ENCODE measurements at regions of chr2 and their contacts with region 1.

Region 1: GRCh38 chr2:187499941-187500532 is 52.0 kb upstream of the CALCRL start:
- DNase-seq: no peak
- ATAC-seq: peak; percentile 94
- H3K4me3 ChIP-seq: no peak overlapping the region
- H3K27ac ChIP-seq: no peak overlapping the region
- H3K4me1 ChIP-seq: no peaks in the 10 kb centered on the region
- H3K27me3 ChIP-seq: no peaks in the 10 kb centered on the region
- CTCF ChIP-seq: peak; percentile 61 to 92 (median 63); a peak in 5 of 6 replicates
- EP300 ChIP-seq: no peak
- POLR2A ChIP-seq: no peak
- RAD21 ChIP-seq: peak; percentile 99

Region 2: GRCh38 chr2:187475499-187476248 is 24.4 kb before region 1 on chr2:
- CTCF ChIA-PET with region 1: interaction called, 9 read pairs
- POLR2A ChIA-PET with region 1: no interaction called
- RAD21 ChIA-PET with region 1: interaction called, 3 read pairs
- SMC1A ChIA-PET with region 1: interaction called, 10 read pairs
- in situ Hi-C with region 1: no loop called
- intact Hi-C with region 1: no loop called
- DNase-seq: no peak
- ATAC-seq: peak; percentile 93
- H3K4me3 ChIP-seq: no peak overlapping the region
- H3K27ac ChIP-seq: peak overlapping the region; percentile 47
- H3K4me1 ChIP-seq: no peaks in the 10 kb centered on the region
- H3K27me3 ChIP-seq: no peaks in the 10 kb centered on the region
- CTCF ChIP-seq: no peak
- EP300 ChIP-seq: peak; percentile 69 to 84; a peak in 2 of 4 replicates
- POLR2A ChIP-seq: no peak
- RAD21 ChIP-seq: no peak

Region 3: GRCh38 chr2:187519419-187520120 is 19.5 kb after region 1 on chr2:
- CTCF ChIA-PET with region 1: interaction called, 14 read pairs
- POLR2A ChIA-PET with region 1: no interaction called
- RAD21 ChIA-PET with region 1: interaction called, 4 read pairs
- SMC1A ChIA-PET with region 1: interaction called, 17 read pairs
- in situ Hi-C with region 1: no loop called
- intact Hi-C with region 1: no loop called
- DNase-seq: no peak
- ATAC-seq: peak; percentile 73
- H3K4me3 ChIP-seq: no peak overlapping the region
- H3K27ac ChIP-seq: no peak overlapping the region
- H3K4me1 ChIP-seq: no peaks in the 10 kb centered on the region
- H3K27me3 ChIP-seq: no peaks in the 10 kb centered on the region
- CTCF ChIP-seq: no peak
- EP300 ChIP-seq: no peak
- POLR2A ChIP-seq: no peak
- RAD21 ChIP-seq: no peak

Region 4: DNA sequence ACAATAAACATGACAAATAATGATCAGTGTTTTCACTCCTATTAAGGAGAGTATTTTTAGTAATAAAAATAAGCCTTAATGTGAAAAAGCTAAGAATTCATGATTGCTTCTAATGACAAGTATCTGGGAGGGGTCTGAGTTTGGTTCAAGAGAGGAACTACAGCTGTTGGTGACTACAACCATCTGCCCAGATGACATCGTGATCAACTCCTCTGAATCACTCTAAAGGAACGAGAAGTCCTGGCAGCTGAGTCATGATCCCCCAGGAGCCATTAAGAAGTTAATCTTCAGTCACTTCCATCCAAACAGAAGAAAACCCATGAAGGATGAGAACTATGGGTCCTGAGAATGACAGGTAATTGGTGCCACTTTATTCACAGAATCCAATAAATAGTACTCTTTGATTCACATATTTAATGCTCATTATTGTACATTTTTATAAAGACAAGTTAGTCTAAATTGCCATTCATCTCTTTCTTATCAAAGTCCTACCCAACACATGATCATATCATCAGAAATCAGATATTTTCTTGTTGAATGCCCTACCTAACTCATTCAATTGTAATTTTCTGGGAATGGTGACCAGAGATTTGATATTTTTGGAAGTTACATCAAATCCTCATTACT is 47.4 kb after region 1 on chr2:
- CTCF ChIA-PET with region 1: interaction called, 22 read pairs
- POLR2A ChIA-PET with region 1: interaction called, 4 read pairs
- RAD21 ChIA-PET with region 1: interaction called, 11 read pairs
- SMC1A ChIA-PET with region 1: interaction called, 32 read pairs
- in situ Hi-C with region 1: no loop called
- intact Hi-C with region 1: no loop called
- DNase-seq: no peak
- ATAC-seq: peak; percentile 27; the same call in 1 of the 3 replicates
- H3K4me3 ChIP-seq: no peak overlapping the region
- H3K27ac ChIP-seq: no peak overlapping the region
- H3K4me1 ChIP-seq: no peaks in the 10 kb centered on the region
- H3K27me3 ChIP-seq: no peaks in the 10 kb centered on the region
- CTCF ChIP-seq: no peak
- EP300 ChIP-seq: no peak
- POLR2A ChIP-seq: no peak
- RAD21 ChIP-seq: no peak

Region 5: DNA sequence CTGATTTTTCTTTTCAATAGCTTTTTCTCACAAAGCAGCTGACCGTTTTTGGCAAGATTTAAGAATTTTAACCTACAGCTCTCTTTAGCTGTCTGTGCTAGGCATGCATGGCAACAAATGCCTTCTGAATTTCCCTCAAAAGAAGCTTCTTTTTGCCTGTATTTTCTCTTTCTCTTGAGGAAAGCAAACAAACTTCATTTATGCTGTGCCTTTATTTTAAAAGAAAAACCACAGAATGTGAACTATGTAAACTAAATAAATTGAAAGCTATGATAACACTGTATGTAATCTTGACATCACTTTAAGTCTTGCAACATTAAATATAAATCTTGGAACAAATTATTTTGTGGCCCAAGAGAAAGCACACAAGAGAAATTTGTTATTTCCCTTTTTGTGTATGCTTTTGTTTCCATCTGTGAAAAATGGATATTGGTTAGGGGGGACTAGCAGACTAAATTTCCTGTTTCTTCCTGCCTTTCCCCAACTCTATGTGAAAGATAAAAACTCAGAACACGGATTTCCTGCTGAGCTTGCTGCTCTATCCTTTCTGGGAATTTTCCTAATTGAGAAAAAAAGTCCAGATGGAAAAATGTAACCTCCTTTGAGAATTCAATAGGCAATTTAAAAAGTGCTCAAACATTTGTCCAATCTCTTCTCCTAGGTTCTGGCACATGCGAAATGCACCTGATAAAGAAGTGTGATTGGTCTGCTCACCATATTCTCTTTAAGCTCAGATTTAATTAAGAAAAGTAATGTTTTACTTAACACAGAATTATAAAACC is 75.1 kb after region 1 on chr2:
- CTCF ChIA-PET with region 1: interaction called, 562 read pairs
- POLR2A ChIA-PET with region 1: interaction called, 11 read pairs
- RAD21 ChIA-PET with region 1: interaction called, 297 read pairs
- SMC1A ChIA-PET with region 1: interaction called, 389 read pairs
- in situ Hi-C with region 1: loop called (anchors 5 kb)
- intact Hi-C with region 1: loop called (anchors 1 kb)
- DNase-seq: no peak
- ATAC-seq: no peak
- H3K4me3 ChIP-seq: no peak overlapping the region
- H3K27ac ChIP-seq: no peak overlapping the region
- H3K4me1 ChIP-seq: no peaks in the 10 kb centered on the region
- H3K27me3 ChIP-seq: no peaks in the 10 kb centered on the region
- CTCF ChIP-seq: no peak
- EP300 ChIP-seq: no peak
- POLR2A ChIP-seq: no peak
- RAD21 ChIP-seq: no peak

Region 6: GRCh38 chr2:188369365-188369764 is 869.3 kb after region 1 on chr2:
- CTCF ChIA-PET with region 1: interaction called, 8 read pairs
- POLR2A ChIA-PET with region 1: no interaction called
- RAD21 ChIA-PET with region 1: interaction called, 5 read pairs
- SMC1A ChIA-PET with region 1: interaction called, 7 read pairs
- in situ Hi-C with region 1: no loop called
- intact Hi-C with region 1: loop called (anchors 10 kb)
- DNase-seq: no peak
- ATAC-seq: peak; percentile 89
- H3K4me3 ChIP-seq: no peak overlapping the region
- H3K27ac ChIP-seq: no peak overlapping the region
- H3K4me1 ChIP-seq: no peaks in the 10 kb centered on the region
- H3K27me3 ChIP-seq: no peaks in the 10 kb centered on the region
- CTCF ChIP-seq: peak; percentile 58 to 68 (median 67)
- EP300 ChIP-seq: no peak
- POLR2A ChIP-seq: no peak
- RAD21 ChIP-seq: peak; percentile 59